Endothelial cell of umbilical vein (primary cell): ENCODE measurements at regions of chr1 and their contacts with region 1.

Region 1: DNA sequence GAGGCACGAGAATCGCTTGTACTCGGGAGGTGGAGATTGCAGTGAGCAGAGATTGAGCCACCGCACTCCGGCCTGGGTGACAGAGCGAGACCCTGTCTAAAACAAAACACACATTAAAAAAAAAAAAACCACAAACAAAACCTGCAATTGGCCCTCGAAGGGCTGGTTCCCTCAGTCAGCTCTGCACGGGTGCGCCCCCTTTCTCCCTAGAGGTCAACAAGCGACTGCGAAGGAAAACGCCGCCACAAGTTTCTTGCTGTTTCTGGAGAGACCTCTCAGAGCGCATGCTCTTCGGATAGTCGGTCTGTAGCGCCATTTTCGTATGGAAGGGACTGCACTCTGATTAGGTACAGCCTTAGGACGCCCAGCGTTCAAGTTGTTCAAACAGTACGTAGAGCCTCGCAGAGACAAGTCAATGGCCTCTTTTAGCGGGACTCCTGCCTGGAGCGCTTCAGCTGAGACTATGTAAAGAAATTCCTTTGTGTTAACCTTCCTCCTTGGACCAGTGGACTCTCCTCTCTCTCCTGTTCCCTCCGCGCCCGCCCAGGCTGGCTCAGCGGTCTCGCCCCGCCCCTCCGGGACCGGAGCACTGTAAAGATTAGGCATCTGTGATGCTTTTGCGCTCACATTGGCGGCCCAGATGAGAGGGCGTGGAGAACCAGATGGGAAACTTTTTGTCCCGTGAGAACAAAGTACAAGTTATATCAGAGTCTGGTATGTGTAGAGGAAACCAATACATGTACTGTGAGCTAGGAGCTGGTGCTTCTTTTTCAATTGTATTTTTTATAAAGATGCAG is 1.0 kb upstream of the CDC14A start:
- DNase-seq: peak; percentile 96
- H3K4me3 ChIP-seq: peak overlapping the region; percentile 77 to 97 (median 84)
- H3K27ac ChIP-seq: peak overlapping the region; percentile 84
- H3K4me1 ChIP-seq: peaks cover 33% of the 10 kb centered on the region
- H3K27me3 ChIP-seq: no peaks in the 10 kb centered on the region
- CTCF ChIP-seq: peak; percentile 18 to 41
- POLR2A ChIP-seq: peak; percentile 89

Region 2: DNA sequence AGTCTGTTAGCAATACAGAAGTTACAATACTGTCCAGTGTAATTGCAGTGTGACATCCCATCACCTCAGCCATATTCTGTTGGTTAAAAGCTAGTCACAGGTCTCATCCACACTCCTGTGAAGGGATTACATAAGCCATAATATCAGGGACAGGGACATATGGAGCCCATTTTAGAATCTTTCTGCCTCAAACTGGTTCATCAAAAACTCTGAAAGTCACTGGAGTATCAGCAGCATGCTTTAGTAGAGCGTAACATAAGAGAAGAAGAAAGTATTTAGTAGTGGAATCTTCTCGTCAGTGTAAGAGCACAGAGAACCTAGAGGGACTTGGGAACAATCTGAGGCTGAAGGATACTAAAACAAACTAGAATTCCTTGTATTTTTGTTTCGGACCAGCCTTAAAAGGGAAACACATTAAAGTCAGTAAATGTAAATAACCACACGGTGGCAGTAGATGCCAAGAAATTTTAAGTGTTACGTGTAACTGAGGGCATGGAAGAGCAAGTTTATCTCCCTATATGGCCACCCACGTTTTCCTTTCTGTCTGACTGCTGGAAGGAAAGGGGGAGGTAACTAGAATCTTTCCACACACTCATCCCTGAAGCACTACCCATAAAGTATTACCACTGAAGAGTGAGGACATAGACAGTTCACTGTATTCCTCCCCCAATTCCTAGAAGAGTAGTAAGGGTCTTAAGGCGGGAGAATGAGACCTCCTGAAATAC is 542.7 kb before region 1 on chr1:
- CTCF ChIA-PET with region 1: no interaction called
- POLR2A ChIA-PET with region 1: no interaction called
- dilution Hi-C with region 1: no loop called
- intact Hi-C with region 1: loop called (anchors 2 kb)
- DNase-seq: peak; percentile 87
- H3K4me3 ChIP-seq: peak overlapping the region in 1 of 3 experiments; percentile 15
- H3K27ac ChIP-seq: no peak overlapping the region
- H3K4me1 ChIP-seq: peaks cover 8% of the 10 kb centered on the region
- H3K27me3 ChIP-seq: peaks cover 15 to 21% of the 10 kb centered on the region in 2 experiments
- CTCF ChIP-seq: peak; percentile 23 to 41
- POLR2A ChIP-seq: no peak

Region 3: GRCh38 chr1:100265931-100266740 is 85.2 kb before region 1 on chr1 and contains the start of gene RTCA:
- CTCF ChIA-PET with region 1: interaction called, 9 read pairs
- POLR2A ChIA-PET with region 1: interaction called, 6 read pairs
- dilution Hi-C with region 1: no loop called
- intact Hi-C with region 1: loop called (anchors 1 kb)
- DNase-seq: peak; percentile 92
- H3K4me3 ChIP-seq: peak within 1 kb of the TSS; percentile 67 to 92 (median 86)
- H3K27ac ChIP-seq: peak within 1 kb of the TSS; percentile 41
- H3K4me1 ChIP-seq: peaks cover 19% of the 10 kb centered on the region
- H3K27me3 ChIP-seq: no peaks in the 10 kb centered on the region
- CTCF ChIP-seq: no peak
- POLR2A ChIP-seq: peak; percentile 90
- total RNA-seq, gene RTCA: 44.8 and 46.6 TPM in 2 replicates

Region 4: GRCh38 chr1:100308777-100309176 is 42.5 kb before region 1 on chr1:
- CTCF ChIA-PET with region 1: no interaction called
- POLR2A ChIA-PET with region 1: interaction called, 3 read pairs
- dilution Hi-C with region 1: no loop called
- intact Hi-C with region 1: loop called (anchors 5 kb)
- DNase-seq: peak; percentile 74
- H3K4me3 ChIP-seq: no peak overlapping the region
- H3K27ac ChIP-seq: no peak overlapping the region
- H3K4me1 ChIP-seq: peaks cover 9% of the 10 kb centered on the region
- H3K27me3 ChIP-seq: no peaks in the 10 kb centered on the region
- CTCF ChIP-seq: no peak
- POLR2A ChIP-seq: no peak

Region 5: GRCh38 chr1:100597061-100597741 is 245.9 kb after region 1 on chr1:
- CTCF ChIA-PET with region 1: no interaction called
- POLR2A ChIA-PET with region 1: no interaction called
- dilution Hi-C with region 1: no loop called
- intact Hi-C with region 1: loop called (anchors 5 kb)
- DNase-seq: peak; percentile 95
- H3K4me3 ChIP-seq: no peak overlapping the region
- H3K27ac ChIP-seq: peak overlapping the region; percentile 93
- H3K4me1 ChIP-seq: peaks cover 28% of the 10 kb centered on the region
- H3K27me3 ChIP-seq: no peaks in the 10 kb centered on the region
- CTCF ChIP-seq: no peak
- POLR2A ChIP-seq: no peak

Region 6: GRCh38 chr1:100657876-100658715 is 306.8 kb after region 1 on chr1:
- CTCF ChIA-PET with region 1: no interaction called
- POLR2A ChIA-PET with region 1: no interaction called
- dilution Hi-C with region 1: no loop called
- intact Hi-C with region 1: no loop called
- DNase-seq: peak; percentile 65
- H3K4me3 ChIP-seq: no peak overlapping the region
- H3K27ac ChIP-seq: no peak overlapping the region
- H3K4me1 ChIP-seq: peaks cover 3% of the 10 kb centered on the region
- H3K27me3 ChIP-seq: no peaks in the 10 kb centered on the region
- CTCF ChIP-seq: no peak
- POLR2A ChIP-seq: no peak

Region 7: DNA sequence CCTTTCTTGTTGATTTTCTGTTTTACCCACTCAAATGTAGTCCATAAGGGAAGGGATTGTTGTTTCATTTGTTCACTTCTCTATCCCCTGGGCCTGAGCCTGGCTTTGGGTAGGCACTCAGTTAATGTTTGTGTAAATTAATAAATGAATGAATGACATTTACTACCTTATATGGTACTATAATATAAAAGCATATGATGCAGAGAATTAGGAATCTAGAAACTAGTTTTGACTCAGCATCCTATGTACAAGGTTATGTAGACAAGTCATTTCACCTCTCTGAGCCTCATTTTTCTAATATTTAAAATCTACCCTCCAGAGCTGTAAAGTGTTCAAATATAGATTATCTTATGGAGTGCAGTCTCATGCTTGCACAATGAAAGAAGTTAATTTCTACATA is 816.6 kb after region 1 on chr1:
- CTCF ChIA-PET with region 1: no interaction called
- POLR2A ChIA-PET with region 1: no interaction called
- dilution Hi-C with region 1: no loop called
- intact Hi-C with region 1: no loop called
- DNase-seq: no peak
- H3K4me3 ChIP-seq: no peak overlapping the region
- H3K27ac ChIP-seq: no peak overlapping the region
- H3K4me1 ChIP-seq: peaks cover 20% of the 10 kb centered on the region
- H3K27me3 ChIP-seq: no peaks in the 10 kb centered on the region
- CTCF ChIP-seq: no peak
- POLR2A ChIP-seq: no peak